RWPE1 (cell line): ENCODE measurements at regions of chr11 and their contacts with region 1.

Region 1: GRCh38 chr11:16713594-16713993 is 24.9 kb upstream of the C11orf58 start:
- DNase-seq: no peak
- H3K27ac ChIP-seq: no peak overlapping the region
- CTCF ChIP-seq: no peak

Region 2: DNA sequence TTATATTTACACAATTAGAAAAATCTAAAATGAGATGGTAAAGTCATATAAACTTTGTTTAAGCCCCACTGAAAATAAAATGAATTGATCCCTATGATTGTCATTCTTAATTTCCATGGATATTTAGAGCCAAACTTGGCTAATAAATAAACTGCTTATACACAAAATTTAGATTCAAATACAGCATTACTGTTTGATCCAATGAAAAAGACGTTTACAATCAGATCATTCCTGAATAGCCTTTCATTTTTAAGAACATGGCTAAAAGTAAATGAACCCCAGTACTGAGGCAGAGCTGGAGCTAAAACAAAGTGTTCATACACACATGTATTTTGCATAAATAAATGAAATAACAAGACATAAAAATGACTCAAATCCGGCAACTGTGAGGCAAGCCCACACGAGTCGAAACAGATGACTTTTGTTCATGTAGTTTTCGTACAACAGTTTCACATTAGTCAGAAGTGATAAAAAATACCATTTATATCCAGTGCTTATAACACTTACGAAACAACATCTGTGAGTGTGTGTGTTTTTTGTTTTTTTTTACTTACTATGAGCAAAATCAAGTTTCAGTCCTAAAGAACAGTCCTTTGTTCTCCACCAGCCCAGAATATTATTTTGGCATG is 743.8 kb before region 1 on chr11:
- CTCF ChIA-PET with region 1: interaction called, 15 read pairs
- POLR2A ChIA-PET with region 1: no interaction called
- DNase-seq: peak; percentile 53
- H3K27ac ChIP-seq: no peak overlapping the region
- CTCF ChIP-seq: no peak

Region 3: DNA sequence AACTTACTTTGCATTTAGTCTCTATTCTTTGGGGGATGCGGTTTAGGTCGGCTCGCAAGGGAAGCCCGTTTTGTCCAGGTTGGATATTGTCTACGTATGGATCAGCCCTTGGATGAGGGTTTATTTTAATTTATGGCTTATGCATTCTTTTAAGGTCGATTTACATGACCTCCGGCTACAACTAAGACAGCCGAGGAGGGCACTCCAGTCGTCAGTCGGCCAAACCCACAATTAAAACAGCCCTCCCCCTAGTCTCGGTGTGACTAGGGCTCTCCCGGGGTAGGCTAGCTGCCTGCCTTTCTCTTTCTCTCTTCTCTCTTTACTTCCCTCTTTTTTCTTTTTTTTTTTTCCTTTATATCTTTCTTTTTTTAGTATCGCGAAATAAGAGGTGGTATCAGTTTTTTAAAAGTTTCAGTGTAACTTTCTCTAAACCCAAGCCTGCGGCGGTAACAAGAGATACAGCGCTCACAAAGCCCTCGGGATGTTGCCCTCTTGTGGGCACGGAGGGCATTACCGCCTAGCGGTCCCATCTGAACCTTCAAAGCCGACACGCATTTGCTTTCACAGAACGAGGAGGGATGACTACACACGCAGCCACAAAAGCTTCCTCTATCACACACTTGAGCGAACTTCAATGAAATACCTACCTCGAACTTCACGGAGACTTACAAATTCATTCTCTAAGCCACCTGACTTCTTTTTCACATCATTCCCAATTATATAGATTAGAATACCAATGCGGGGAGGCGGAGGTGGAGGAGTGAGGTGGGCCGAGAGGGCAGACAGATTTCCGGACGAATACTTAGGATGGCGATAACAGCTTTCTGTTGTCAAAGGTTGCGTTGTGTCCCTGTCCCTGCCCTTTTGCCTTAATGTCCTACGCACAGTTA is 107.5 kb before region 1 on chr11:
- CTCF ChIA-PET with region 1: no interaction called
- POLR2A ChIA-PET with region 1: no interaction called
- DNase-seq: peak; percentile 78
- H3K27ac ChIP-seq: peak overlapping the region; percentile 92
- CTCF ChIP-seq: peak; percentile 96

Region 4: DNA sequence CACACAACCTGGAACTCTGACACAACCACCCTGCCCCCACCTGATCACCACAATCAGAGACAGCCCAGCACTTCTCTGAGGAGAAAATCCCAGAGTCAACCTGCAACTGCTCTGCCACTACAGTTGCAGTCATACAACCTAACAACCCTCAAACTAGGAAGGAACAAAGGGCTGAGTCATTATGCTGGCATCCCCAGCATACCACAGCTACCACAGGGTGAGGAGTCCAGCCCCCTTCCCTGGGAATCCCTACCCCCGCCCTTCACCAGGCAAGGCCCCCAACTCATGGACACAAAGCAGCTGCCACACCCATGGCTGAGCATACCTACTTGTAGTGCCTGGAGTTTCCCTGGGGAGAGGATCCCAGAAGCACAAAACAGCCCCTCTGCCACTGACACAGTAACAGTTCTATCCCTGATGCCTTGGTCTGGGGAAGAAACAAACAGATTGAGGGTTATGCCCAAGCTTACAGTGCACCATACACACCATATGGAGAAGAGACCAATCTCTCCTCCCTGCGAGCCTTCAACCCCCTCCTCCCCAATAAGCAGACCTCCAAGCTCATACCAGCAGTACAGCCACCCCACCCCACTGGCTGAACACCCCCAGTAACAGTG is 43.7 kb before region 1 on chr11:
- CTCF ChIA-PET with region 1: no interaction called
- POLR2A ChIA-PET with region 1: no interaction called
- DNase-seq: peak; percentile 66
- H3K27ac ChIP-seq: no peak overlapping the region
- CTCF ChIP-seq: no peak